Caco-2 (cell line): ENCODE measurements at regions of chr17 and their contacts with region 1.

Region 1: GRCh38 chr17:8156246-8156992 is 4.2 kb upstream of the PER1 start:
- DNase-seq: peak; percentile 97 to 99
- H3K4me3 ChIP-seq: peak overlapping the region; percentile 44
- H3K4me3 Mint-ChIP-seq: no peak overlapping the region
- H3K27ac Mint-ChIP-seq: no peak overlapping the region
- H3K4me1 ChIP-seq: peaks cover 19% of the 10 kb centered on the region
- H3K4me1 Mint-ChIP-seq: peaks cover 26% of the 10 kb centered on the region
- H3K27me3 ChIP-seq: no peaks in the 10 kb centered on the region
- H3K27me3 Mint-ChIP-seq: no peaks in the 10 kb centered on the region
- CTCF ChIP-seq: no peak

Region 2: DNA sequence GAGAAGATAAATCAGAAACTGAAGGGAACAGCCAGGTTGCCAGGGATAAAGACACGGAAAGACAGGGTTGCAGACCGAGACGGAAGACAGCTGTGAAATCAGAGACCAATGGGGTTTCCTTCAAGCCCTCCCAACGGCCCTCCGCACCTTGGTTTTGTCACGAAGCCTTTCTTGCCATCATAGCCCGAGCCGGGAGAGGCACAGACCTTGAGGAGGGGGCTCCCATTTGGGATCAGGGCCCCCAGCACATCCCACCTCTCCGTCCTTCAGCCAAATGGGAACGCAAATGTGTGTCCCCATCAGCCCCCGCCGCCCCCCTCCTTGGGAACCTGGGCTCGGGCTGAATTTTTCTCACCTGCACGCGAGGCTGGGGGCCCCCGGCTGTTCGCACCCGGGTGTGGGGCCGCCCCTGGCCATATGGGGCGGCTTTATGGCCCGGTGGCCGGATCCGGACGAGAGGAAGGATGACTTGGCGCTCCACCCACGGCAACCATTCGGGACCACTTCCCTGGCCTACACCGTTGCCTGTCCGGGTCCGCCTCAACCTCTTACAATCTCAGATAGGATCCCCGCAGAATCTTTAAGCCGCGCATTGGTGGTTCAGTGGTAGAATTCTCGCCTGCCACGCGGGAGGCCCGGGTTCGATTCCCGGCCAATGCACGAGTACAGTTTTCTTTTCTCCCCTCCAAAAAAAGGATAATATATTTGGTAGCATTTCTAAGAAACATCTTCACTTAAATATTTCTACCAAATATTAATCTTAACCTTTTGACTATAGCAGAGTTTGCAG is 31.1 kb before region 1 on chr17:
- CTCF ChIA-PET with region 1: interaction called, 3 read pairs
- POLR2A ChIA-PET with region 1: interaction called, 3 read pairs
- intact Hi-C with region 1: loop called (anchors 2 kb)
- DNase-seq: peak; percentile 63 to 79
- H3K4me3 ChIP-seq: peak overlapping the region; percentile 54
- H3K4me3 Mint-ChIP-seq: peak overlapping the region; percentile 87
- H3K27ac Mint-ChIP-seq: peak overlapping the region; percentile 64
- H3K4me1 ChIP-seq: no peaks in the 10 kb centered on the region; the same call in 1 of the 2 replicates
- H3K4me1 Mint-ChIP-seq: peaks cover 35% of the 10 kb centered on the region
- H3K27me3 ChIP-seq: no peaks in the 10 kb centered on the region; the same call in 1 of the 2 replicates
- H3K27me3 Mint-ChIP-seq: peaks cover 6% of the 10 kb centered on the region
- CTCF ChIP-seq: no peak

Region 3: DNA sequence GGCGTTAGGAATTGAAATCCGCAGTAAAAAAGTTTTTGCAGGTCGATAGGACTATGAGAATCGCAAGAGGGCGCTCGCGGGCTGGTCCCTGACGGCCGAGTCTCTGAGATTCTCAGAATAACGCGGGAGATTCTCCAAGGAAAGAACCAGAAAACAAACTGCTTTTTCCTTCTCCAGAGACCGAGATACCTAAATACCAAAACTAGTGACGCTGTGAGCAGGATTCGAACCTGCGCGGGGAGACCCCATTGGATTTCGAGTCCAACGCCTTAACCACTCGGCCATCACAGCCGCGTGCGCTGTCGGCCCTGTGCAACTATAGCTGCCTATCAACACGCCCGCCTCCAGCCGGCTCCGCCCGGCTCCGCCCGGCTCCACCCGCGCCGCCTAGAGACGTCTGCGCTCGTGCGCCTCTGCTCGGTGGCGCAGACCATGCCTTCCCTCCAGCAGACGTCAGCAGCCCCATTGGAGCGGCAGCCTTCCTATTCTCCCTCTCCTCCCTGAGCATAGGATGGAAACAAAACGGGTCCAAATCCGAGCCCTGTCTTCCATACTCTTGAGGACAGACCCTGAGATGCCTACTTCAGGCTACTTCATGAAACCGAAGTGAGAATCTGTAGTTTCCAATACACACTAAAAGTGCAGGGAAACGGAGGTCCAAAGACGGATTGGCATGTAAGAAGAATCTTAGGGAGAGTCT is 17.6 kb before region 1 on chr17:
- CTCF ChIA-PET with region 1: interaction called, 4 read pairs
- POLR2A ChIA-PET with region 1: no interaction called
- intact Hi-C with region 1: loop called (anchors 1 kb)
- DNase-seq: peak; percentile 92 to 93
- H3K4me3 ChIP-seq: peak overlapping the region; percentile 45
- H3K4me3 Mint-ChIP-seq: no peak overlapping the region
- H3K27ac Mint-ChIP-seq: no peak overlapping the region
- H3K4me1 ChIP-seq: peaks cover 4% of the 10 kb centered on the region; the same call in 1 of the 2 replicates
- H3K4me1 Mint-ChIP-seq: no peaks in the 10 kb centered on the region
- H3K27me3 ChIP-seq: no peaks in the 10 kb centered on the region
- H3K27me3 Mint-ChIP-seq: no peaks in the 10 kb centered on the region
- CTCF ChIP-seq: peak; percentile 65 to 73

Region 4: DNA sequence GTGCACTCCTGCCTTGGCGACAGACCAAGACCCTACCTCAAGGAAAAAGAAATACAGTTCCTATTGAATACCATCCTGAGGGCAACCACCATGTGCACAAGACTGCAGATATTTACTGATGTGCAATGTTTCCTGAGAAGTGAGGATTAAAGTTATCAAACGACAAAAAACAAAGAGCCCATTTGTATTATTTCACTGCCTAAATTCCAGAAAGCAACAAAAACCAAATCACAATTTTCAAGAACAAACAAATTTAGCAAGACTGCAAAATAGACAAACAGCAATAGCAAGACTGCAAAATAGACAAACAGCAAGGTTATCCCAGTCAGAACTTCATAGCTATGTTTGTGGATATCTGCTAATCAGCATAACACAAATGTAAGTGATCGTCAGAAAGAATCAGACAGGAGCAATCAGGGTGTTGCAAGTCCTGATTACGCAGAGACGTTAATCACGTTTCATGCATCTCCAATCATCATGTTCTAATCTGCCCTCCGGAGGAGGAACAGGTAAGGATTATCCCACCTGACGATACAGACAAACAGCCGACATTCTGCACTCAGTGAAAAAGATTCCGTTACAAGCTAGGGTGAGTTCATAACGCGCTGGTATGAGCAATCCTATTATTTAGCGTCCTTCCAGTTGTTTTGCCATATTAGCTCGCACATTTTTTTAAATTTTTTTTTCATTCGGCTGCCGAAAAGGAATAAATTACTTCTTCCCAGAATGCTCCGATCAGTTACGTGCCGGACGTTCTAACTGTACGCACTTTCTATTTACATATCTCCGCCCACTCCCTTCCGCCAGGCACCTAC is 16.8 kb after region 1 on chr17:
- CTCF ChIA-PET with region 1: interaction called, 3 read pairs
- POLR2A ChIA-PET with region 1: interaction called, 23 read pairs
- intact Hi-C with region 1: no loop called
- DNase-seq: peak; percentile 83 to 84
- H3K4me3 ChIP-seq: peak overlapping the region; percentile 34
- H3K4me3 Mint-ChIP-seq: peak overlapping the region; percentile 89
- H3K27ac Mint-ChIP-seq: peak overlapping the region; percentile 100
- H3K4me1 ChIP-seq: no peaks in the 10 kb centered on the region
- H3K4me1 Mint-ChIP-seq: peaks cover 7% of the 10 kb centered on the region
- H3K27me3 ChIP-seq: no peaks in the 10 kb centered on the region
- H3K27me3 Mint-ChIP-seq: no peaks in the 10 kb centered on the region
- CTCF ChIP-seq: no peak